ENCODE measurements at regions of chr12 and their contacts with region 1.

Region 1: GRCh38 chr12:53623548-53624385 is 2.4 kb downstream of the ATF7 start:
- DNase-seq: no peak

Region 2: DNA sequence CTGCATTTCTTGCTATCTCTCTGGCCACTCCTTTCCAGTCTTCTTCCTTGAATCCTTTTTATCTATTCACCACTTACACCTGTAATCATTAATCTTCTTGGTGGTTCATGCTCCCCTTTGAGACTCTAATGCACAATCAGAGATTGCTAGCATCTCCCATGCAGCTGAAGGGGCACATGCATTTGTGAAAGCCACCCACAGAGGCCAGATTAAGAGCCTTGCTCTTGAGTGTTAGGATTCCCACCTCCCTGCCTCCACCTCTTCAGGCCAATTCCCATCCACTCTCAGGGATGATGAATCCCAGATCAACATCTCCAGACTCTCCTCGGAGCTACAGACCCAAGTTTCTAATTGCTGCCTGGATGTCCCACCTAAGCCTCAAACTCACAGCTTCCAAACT is 694.2 kb before region 1 on chr12:
- intact Hi-C with region 1: no loop called
- DNase-seq: no peak

Region 3: GRCh38 chr12:53664936-53665335 is 41.2 kb after region 1 on chr12:
- intact Hi-C with region 1: loop called (anchors 5 kb)
- DNase-seq: no peak